Panc1 (cell line): ENCODE measurements at regions of chr1 and their contacts with region 1.

Region 1: DNA sequence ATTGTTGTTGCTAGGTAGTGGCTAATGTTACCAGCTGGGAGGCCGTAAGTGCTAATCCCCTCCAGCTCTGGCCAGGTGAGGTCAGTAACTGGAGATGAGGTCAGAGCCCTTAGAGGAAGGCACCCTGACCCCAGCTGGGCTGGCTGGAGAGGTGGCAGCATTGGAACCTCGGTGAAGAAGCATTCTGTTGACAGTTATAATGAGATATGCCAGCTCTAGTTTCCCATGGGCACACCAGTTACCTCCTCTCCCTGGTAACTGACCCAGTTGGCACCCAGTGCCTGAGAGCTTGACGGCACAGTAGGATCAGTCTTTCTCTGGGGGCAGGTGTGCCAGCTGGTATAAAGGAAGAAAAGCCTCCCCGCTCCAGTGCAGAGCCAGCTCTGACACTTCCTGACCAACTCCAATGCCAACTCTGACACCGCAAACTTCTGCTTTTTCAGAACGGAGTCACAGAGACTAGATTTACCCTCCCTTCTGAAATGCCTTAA is 35.0 kb upstream of the SLC2A1 start:
- DNase-seq: no peak
- ATAC-seq: no peak
- H3K4me3 ChIP-seq: no peak overlapping the region
- H3K27ac ChIP-seq: no peak overlapping the region
- H3K4me1 ChIP-seq: no peaks in the 10 kb centered on the region
- H3K27me3 ChIP-seq: no peaks in the 10 kb centered on the region
- CTCF ChIP-seq: no peak

Region 2: GRCh38 chr1:41013796-41014195 is 1979.9 kb before region 1 on chr1:
- CTCF ChIA-PET with region 1: no interaction called
- POLR2A ChIA-PET with region 1: interaction called, 11 read pairs
- in situ Hi-C with region 1: no loop called
- intact Hi-C with region 1: no loop called
- DNase-seq: no peak
- ATAC-seq: no peak
- H3K4me3 ChIP-seq: no peak overlapping the region
- H3K27ac ChIP-seq: no peak overlapping the region
- H3K4me1 ChIP-seq: 0 out of 2 replicates have a peak, but pooled peaks cover 7% of the 10 kb centered on the region
- H3K27me3 ChIP-seq: no peaks in the 10 kb centered on the region
- CTCF ChIP-seq: no peak

Region 3: DNA sequence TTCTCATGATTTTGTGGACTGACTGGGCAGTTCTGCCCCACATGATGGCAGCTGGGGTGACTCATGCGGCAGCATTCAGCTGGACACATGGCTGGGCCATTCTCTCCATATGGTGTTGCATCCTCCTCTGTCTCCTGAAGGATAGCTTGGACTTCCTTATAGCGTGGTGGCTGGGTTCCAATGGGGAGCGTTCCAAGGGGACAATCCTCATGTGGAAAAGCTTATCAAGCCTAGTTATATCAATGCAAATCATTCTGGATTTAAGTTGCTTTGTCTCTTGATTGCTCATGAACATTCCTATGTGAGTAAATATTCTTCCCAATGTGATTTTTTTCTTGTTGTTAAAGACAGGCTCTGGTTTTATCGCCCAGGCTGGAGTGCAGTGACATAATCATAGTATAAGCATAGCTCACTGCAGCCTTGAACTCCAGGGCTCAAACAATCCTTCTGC is 21.8 kb before region 1 on chr1:
- CTCF ChIA-PET with region 1: no interaction called
- POLR2A ChIA-PET with region 1: interaction called, 14 read pairs
- in situ Hi-C with region 1: no loop called
- intact Hi-C with region 1: no loop called
- DNase-seq: no peak
- ATAC-seq: no peak
- H3K4me3 ChIP-seq: no peak overlapping the region
- H3K27ac ChIP-seq: no peak overlapping the region
- H3K4me1 ChIP-seq: peaks cover 8% of the 10 kb centered on the region
- H3K27me3 ChIP-seq: no peaks in the 10 kb centered on the region
- CTCF ChIP-seq: no peak

Region 4: GRCh38 chr1:43101061-43101460 is 107.4 kb after region 1 on chr1:
- CTCF ChIA-PET with region 1: no interaction called
- POLR2A ChIA-PET with region 1: no interaction called
- in situ Hi-C with region 1: no loop called
- intact Hi-C with region 1: no loop called
- DNase-seq: no peak
- ATAC-seq: no peak
- H3K4me3 ChIP-seq: no peak overlapping the region
- H3K27ac ChIP-seq: no peak overlapping the region
- H3K4me1 ChIP-seq: no peaks in the 10 kb centered on the region
- H3K27me3 ChIP-seq: no peaks in the 10 kb centered on the region
- CTCF ChIP-seq: no peak